ENCODE measurements at regions of chrX and their contacts with region 1.

Region 1: GRCh38 chrX:13341491-13342101 is 21.7 kb upstream of the ATXN3L start:
- DNase-seq: no peak
- ATAC-seq: no peak
- H3K4me3 ChIP-seq: no peak overlapping the region
- H3K27ac ChIP-seq: no peak overlapping the region
- H3K4me1 ChIP-seq: no peaks in the 10 kb centered on the region
- H3K27me3 ChIP-seq: no peaks in the 10 kb centered on the region
- CTCF ChIP-seq: no peak

Region 2: GRCh38 chrX:13014111-13015094 is 327.2 kb before region 1 on chrX:
- intact Hi-C with region 1: no loop called
- DNase-seq: no peak
- ATAC-seq: no peak
- H3K4me3 ChIP-seq: no peak overlapping the region
- H3K27ac ChIP-seq: peak overlapping the region in 2 of 4 donors; percentile 14 to 44
- H3K4me1 ChIP-seq: peaks cover 0 to 13% (median 0%) of the 10 kb centered on the region in 3 donors
- H3K27me3 ChIP-seq: no peaks in the 10 kb centered on the region
- CTCF ChIP-seq: no peak

Region 3: GRCh38 chrX:13142891-13143290 is 198.7 kb before region 1 on chrX:
- intact Hi-C with region 1: no loop called
- DNase-seq: peak in 4 of 6 donors; percentile 22 to 55 (median 26)
- ATAC-seq: peak; percentile 71 to 98 (median 84)
- H3K4me3 ChIP-seq: no peak overlapping the region
- H3K27ac ChIP-seq: no peak overlapping the region
- H3K4me1 ChIP-seq: peaks cover 0 to 3% (median 0%) of the 10 kb centered on the region in 3 donors
- H3K27me3 ChIP-seq: no peaks in the 10 kb centered on the region
- CTCF ChIP-seq: no peak

Region 4: GRCh38 chrX:13283950-13284914 is 57.4 kb before region 1 on chrX:
- intact Hi-C with region 1: loop called in 1 of 3 experiments (anchors 10 kb)
- DNase-seq: no peak
- ATAC-seq: no peak
- H3K4me3 ChIP-seq: no peak overlapping the region
- H3K27ac ChIP-seq: no peak overlapping the region
- H3K4me1 ChIP-seq: no peaks in the 10 kb centered on the region
- H3K27me3 ChIP-seq: no peaks in the 10 kb centered on the region
- CTCF ChIP-seq: no peak

Region 5: GRCh38 chrX:13506574-13506973 is 165.0 kb after region 1 on chrX:
- intact Hi-C with region 1: no loop called
- DNase-seq: peak in 3 of 6 donors; percentile 40 to 65 (median 45)
- ATAC-seq: peak in 1 of 4 donors; percentile 44
- H3K4me3 ChIP-seq: no peak overlapping the region
- H3K27ac ChIP-seq: no peak overlapping the region
- H3K4me1 ChIP-seq: no peaks in the 10 kb centered on the region
- H3K27me3 ChIP-seq: peaks cover 0 to 8% (median 0%) of the 10 kb centered on the region in 4 donors
- CTCF ChIP-seq: peak; percentile 42 to 72 (median 60)

Region 6: GRCh38 chrX:13898083-13898482 is 556.5 kb after region 1 on chrX:
- intact Hi-C with region 1: no loop called
- DNase-seq: no peak
- ATAC-seq: no peak
- H3K4me3 ChIP-seq: no peak overlapping the region
- H3K27ac ChIP-seq: no peak overlapping the region
- H3K4me1 ChIP-seq: no peaks in the 10 kb centered on the region
- H3K27me3 ChIP-seq: peaks cover 0 to 7% (median 0%) of the 10 kb centered on the region in 4 donors
- CTCF ChIP-seq: no peak